Mammary epithelial cell (primary cell): ENCODE measurements at regions of chr2 and their contacts with region 1.

Region 1: DNA sequence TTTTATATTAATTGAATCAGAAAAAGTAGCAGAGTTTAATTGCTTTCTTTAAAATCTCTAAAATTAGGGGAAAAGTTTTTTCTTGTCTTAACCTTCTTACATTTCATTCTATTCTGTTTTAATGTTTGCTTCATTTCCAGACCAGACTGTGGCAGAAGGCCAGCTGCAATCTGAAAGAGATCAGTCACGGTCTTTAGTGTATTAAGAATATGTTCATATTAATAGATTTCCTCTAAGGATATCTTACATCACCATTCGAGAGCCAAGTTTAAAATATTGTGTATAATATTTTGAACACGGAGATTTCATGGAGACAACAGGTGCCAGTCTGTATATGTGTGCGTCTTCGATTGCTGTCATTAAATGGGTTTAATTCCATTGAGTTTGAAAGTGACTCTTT is 230.9 kb upstream of the ZSWIM2 start:
- DNase-seq: no peak
- H3K4me3 ChIP-seq: no peak overlapping the region
- H3K27ac ChIP-seq: no peak overlapping the region
- H3K4me1 ChIP-seq: no peaks in the 10 kb centered on the region
- H3K27me3 ChIP-seq: no peaks in the 10 kb centered on the region
- CTCF ChIP-seq: no peak

Region 2: DNA sequence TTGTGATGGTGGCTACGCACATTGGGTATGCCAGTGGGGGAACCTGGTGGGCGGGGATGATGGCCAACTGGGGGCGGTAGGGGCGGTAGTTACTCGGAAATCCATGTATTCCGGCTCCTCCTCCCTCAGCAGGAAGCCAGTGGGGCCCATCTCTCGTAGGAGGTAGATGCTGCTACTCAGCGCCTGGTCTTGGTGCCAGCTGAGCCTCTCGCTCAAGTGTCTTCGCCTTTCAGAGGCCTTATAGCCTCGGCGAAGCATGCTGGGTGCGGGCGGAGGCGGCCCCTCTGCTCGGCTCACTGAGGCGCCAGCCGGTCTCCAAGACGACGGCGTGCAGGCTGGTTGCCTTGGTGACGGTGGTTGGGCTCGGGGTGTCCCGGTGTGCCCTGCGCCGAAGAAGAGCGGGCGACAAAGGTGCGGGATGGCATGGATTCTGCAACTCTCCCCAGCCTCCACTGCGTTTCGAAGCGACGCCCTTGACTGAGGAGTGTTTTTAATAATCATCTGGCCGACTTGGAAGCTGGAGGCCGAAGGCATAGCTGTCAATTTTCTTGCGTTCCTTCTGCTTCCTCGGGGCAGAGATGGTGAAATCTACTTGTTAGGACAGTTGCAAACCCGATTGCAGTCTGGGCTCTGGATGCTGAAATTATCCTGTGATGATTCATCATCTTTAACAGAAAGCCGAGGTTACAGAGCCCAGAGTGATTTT is 230.9 kb before region 1 on chr2 and contains the start of gene ZSWIM2:
- CTCF ChIA-PET with region 1: no interaction called
- dilution Hi-C with region 1: no loop called
- in situ Hi-C with region 1: no loop called
- intact Hi-C with region 1: loop called (anchors 5 kb)
- DNase-seq: peak; percentile 76
- H3K4me3 ChIP-seq: peak within 1 kb of the TSS; percentile 43 to 60 (median 48)
- H3K27ac ChIP-seq: no peak within 1 kb of the TSS
- H3K4me1 ChIP-seq: peaks cover 8% of the 10 kb centered on the region
- H3K27me3 ChIP-seq: no peaks in the 10 kb centered on the region
- CTCF ChIP-seq: no peak
- total RNA-seq, gene ZSWIM2: not detected

Region 3: GRCh38 chr2:187093771-187094412 is 14.0 kb after region 1 on chr2:
- CTCF ChIA-PET with region 1: no interaction called
- dilution Hi-C with region 1: no loop called
- in situ Hi-C with region 1: no loop called
- intact Hi-C with region 1: no loop called
- DNase-seq: no peak
- H3K4me3 ChIP-seq: no peak overlapping the region
- H3K27ac ChIP-seq: no peak overlapping the region
- H3K4me1 ChIP-seq: no peaks in the 10 kb centered on the region
- H3K27me3 ChIP-seq: no peaks in the 10 kb centered on the region
- CTCF ChIP-seq: no peak

Region 4: DNA sequence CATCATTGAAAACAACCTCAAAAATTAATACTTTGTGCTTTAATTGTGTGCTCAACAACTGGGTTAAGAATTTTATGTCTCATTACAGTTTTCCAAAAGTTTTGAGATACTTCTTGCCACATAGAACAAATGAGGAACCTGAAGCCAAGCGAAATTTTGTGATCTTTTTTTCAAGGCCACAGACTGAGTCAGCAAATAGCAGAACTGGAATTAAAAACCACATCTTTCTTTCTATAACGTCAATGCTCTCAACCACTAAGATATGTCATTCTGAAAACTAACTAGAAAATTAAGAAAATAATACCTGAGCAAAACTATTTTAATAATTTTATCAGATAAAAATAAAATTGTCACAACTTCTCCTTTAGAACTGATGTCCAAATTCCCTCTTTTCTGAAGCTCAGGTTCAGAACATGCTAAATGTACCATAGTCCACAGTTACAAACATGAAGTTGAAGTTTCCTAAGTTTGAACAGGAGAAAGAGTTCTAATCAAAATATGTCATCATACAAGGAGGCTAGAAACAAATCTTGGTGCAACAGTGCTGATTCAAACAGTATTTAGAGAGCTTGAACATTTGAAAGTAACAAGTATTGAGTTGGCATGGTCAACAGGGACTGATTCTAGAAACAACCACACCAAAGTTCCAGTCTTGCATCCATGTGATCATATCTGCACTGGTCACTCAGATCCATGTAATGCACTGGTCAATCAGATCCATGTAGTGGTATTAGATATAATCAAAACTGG is 395.8 kb after region 1 on chr2:
- CTCF ChIA-PET with region 1: no interaction called
- dilution Hi-C with region 1: no loop called
- in situ Hi-C with region 1: no loop called
- intact Hi-C with region 1: no loop called
- DNase-seq: no peak
- H3K4me3 ChIP-seq: no peak overlapping the region
- H3K27ac ChIP-seq: no peak overlapping the region
- H3K4me1 ChIP-seq: peaks cover 3% of the 10 kb centered on the region
- H3K27me3 ChIP-seq: no peaks in the 10 kb centered on the region
- CTCF ChIP-seq: no peak